ENCODE measurements at regions of chr4 and their contacts with region 1.

Region 1: GRCh38 chr4:69214716-69215115 is at the start of gene UGT2B11:
- DNase-seq: no peak
- ATAC-seq: no peak
- H3K4me3 Mint-ChIP-seq: no peak within 1 kb of the TSS
- H3K27ac Mint-ChIP-seq: no peak within 1 kb of the TSS
- H3K4me1 Mint-ChIP-seq: no peaks in the 10 kb centered on the region
- H3K27me3 Mint-ChIP-seq: no peaks in the 10 kb centered on the region
- CTCF ChIP-seq: no peak
- total RNA-seq, gene UGT2B11: not detected

Region 2: DNA sequence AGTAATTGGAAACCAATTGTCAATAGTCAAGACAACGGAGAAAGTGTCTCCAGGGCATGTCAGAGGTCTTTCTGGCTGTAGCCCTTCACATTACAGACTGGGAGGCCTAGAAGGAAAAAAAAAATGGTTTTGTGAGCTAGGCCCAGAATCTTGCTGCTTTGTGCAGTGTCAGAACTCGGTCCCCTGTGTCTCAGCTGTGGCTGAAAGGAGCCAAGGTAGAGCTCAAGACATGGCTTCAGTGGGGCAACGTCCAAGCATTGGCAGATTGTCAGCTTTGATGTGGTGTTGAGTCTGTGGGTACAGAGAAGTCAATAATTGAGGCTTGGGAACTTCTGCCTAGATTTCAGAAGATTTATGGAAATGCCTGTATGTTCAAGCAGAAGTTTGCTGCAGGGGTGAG is 168.6 kb after region 1 on chr4:
- CTCF ChIA-PET with region 1: no interaction called
- POLR2A ChIA-PET with region 1: no interaction called
- intact Hi-C with region 1: loop called (anchors 5 kb)
- DNase-seq: no peak
- ATAC-seq: no peak
- H3K4me3 Mint-ChIP-seq: no peak overlapping the region
- H3K27ac Mint-ChIP-seq: no peak overlapping the region
- H3K4me1 Mint-ChIP-seq: no peaks in the 10 kb centered on the region
- H3K27me3 Mint-ChIP-seq: no peaks in the 10 kb centered on the region
- CTCF ChIP-seq: no peak